ENCODE measurements at regions of chr7 and their contacts with region 1.

Region 1: GRCh38 chr7:25720427-25720826 is 431.6 kb upstream of the NFE2L3 start:
- DNase-seq: no peak
- H3K4me3 ChIP-seq: no peak overlapping the region
- H3K27ac ChIP-seq: no peak overlapping the region
- H3K4me1 ChIP-seq: no peaks in the 10 kb centered on the region
- H3K27me3 ChIP-seq: no peaks in the 10 kb centered on the region
- CTCF ChIP-seq: no peak

Region 2: GRCh38 chr7:25669961-25670841 is 50.2 kb before region 1 on chr7:
- intact Hi-C with region 1: no loop called
- DNase-seq: no peak
- H3K4me3 ChIP-seq: no peak overlapping the region
- H3K27ac ChIP-seq: no peak overlapping the region
- H3K4me1 ChIP-seq: no peaks in the 10 kb centered on the region
- H3K27me3 ChIP-seq: no peaks in the 10 kb centered on the region
- CTCF ChIP-seq: no peak

Region 3: DNA sequence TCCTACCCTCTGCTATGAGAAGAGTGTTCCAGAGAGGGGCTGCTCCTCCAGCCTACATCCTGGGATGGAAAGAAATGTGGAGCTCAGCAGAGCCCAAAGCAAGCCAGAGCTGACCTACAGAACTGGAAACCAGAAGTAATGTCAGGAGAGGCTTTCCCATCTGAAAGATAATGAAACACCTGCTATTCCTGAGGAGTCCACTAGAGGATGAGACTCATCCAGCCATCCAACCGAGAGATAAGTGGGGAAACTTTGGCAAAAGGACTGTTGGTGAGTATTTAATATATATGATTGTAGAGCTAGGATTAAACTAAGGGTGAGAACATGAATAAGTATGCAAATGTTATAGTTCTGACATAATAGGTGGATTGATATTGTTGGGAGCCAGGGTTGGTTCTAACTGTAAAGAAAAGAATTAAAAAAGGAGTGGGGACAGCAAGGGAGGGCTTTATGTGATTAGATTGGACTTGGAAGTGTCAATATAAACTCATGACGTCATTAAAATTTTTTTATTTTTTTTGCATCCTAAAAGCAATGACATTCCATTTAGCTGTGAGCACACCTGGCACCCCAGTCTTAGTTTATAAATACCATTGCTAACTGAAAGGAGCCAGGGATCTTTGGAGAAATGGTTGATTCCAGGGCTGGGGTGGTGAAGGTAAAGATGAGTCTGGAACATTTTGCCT is 118.8 kb after region 1 on chr7:
- intact Hi-C with region 1: loop called (anchors 10 kb)
- DNase-seq: no peak
- H3K4me3 ChIP-seq: no peak overlapping the region
- H3K27ac ChIP-seq: no peak overlapping the region
- H3K4me1 ChIP-seq: no peaks in the 10 kb centered on the region
- H3K27me3 ChIP-seq: no peaks in the 10 kb centered on the region
- CTCF ChIP-seq: peak; percentile 26